ENCODE measurements at regions of chr13 and their contacts with region 1.

Region 1: DNA sequence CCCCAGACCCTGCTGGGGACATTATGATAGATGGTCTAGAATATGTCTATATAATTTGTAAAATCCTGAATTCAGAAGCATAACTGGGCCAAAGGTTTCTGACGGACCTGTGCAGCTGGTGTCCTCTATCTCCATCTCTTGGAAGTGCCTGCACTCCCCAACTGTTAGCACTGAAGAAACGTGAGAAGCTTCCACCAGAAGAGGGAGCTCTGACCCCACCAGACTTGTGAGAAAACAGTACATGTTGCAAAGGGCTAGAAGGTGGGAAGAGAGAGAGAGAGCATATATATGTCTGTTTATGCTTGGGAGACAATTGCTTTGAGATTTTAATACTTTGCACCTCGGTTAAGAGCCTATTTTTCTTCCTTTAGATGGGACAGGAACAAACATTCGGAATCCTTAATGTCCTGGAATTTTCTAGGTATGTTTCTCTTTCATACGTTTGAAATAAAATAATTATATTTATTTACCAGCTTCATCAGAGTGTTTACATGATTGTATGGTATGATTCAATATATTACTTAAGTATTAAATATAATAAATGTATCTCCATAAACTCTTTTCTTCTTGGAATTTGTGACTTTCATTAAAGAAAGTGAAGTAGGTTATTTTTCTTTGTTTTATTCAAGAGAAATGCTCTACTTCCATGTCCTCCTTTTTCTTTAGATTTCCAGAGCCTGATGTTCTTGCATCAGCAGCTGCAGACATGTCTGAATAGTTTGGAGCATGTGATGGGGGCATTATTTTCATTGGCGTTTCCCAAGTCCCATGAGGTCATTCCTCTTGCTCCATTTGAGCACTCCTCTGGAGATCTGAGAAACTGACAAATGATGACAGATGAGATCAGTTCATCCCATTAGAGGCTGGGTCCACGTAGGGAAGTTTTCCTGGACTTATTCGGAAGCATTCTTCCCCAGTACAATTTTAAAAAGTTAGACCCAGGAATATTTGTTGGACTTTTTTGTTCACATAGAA is 202.9 kb downstream of the ATP8A2 start:
- DNase-seq: peak; percentile 71 to 74 (median 72)
- ATAC-seq: peak; percentile 88 to 89
- H3K4me3 ChIP-seq: no peak overlapping the region
- H3K27ac ChIP-seq: no peak overlapping the region
- H3K4me1 ChIP-seq: no peaks in the 10 kb centered on the region
- H3K27me3 ChIP-seq: peaks cover 3% of the 10 kb centered on the region

Region 2: GRCh38 chr13:25249001-25249543 is 325.7 kb before region 1 on chr13:
- intact Hi-C with region 1: no loop called
- DNase-seq: no peak
- ATAC-seq: no peak
- H3K4me3 ChIP-seq: no peak overlapping the region
- H3K27ac ChIP-seq: no peak overlapping the region
- H3K4me1 ChIP-seq: no peaks in the 10 kb centered on the region
- H3K27me3 ChIP-seq: no peaks in the 10 kb centered on the region

Region 3: GRCh38 chr13:26062844-26063444 is 488.2 kb after region 1 on chr13:
- intact Hi-C with region 1: loop called in 3 of 4 experiments (anchors 5 kb)
- DNase-seq: peak in 1 of 3 donors; percentile 20
- ATAC-seq: peak; percentile 76 to 89
- H3K4me3 ChIP-seq: no peak overlapping the region
- H3K27ac ChIP-seq: no peak overlapping the region
- H3K4me1 ChIP-seq: no peaks in the 10 kb centered on the region
- H3K27me3 ChIP-seq: no peaks in the 10 kb centered on the region

Region 4: GRCh38 chr13:26074706-26075105 is 500.0 kb after region 1 on chr13:
- intact Hi-C with region 1: loop called in 1 of 4 experiments (anchors 5 kb)
- DNase-seq: no peak
- ATAC-seq: peak in 1 of 2 donors; percentile 35
- H3K4me3 ChIP-seq: no peak overlapping the region
- H3K27ac ChIP-seq: no peak overlapping the region
- H3K4me1 ChIP-seq: no peaks in the 10 kb centered on the region
- H3K27me3 ChIP-seq: no peaks in the 10 kb centered on the region